GM23248 (cell line): ENCODE measurements at regions of chr3 and their contacts with region 1.

Region 1: DNA sequence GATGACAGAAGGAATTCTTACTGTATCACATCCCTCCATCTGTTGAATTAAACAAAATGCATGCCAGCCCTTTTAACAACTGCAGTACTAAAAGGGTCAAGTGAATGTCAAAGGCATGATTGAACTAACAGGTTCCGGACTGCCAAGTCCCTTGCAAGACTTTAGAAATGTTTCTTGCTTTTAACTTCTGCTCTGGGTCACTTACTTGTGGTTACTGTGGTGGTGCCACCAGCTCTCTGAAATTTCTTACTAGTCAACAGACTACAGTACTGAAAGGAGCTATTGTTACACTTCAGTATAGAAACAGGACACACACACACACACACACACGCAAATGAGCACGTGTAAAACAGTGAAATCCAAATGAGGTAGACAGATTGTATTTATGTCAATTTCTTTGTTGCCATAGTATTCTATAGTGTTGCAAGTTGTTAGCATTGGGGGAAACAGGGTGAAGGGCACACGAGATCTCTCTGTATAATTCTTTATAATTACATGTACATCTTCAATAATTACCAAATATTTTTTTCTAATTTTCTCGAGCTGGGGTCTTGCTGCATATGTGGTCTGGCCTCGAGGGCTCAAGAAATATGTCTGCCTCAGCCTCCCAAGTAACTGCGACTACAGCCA is 79.9 kb upstream of the SLC25A26 start:
- DNase-seq: peak; percentile 6
- H3K4me3 ChIP-seq: no peak overlapping the region
- H3K27ac ChIP-seq: no peak overlapping the region
- H3K4me1 ChIP-seq: peaks cover 8% of the 10 kb centered on the region
- H3K27me3 ChIP-seq: no peaks in the 10 kb centered on the region

Region 2: DNA sequence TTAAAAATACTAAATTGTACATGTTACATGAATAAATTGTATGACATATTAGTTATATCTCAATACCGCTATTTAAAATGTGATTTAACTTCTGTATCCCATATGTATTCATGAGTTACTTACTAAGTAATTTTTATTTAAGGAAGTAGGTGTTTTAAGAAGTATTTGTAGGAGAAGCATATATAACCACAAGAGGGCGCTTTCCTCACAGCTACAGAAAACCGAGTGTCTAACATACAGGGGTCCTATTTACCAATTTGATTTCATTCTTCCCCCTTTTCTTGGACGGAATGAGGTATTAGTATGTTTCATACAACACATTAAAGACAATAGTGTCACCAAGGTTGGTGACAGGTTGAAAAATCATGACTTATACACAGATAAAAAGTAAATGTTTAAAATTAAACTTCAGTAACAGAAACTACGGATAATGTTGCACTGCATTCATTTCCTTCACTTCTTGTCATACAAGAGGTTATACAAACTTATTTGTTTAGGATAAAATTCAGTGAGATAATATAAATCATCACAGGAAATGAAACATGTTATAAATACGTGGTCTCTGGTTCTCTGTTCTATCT is 355.7 kb before region 1 on chr3:
- in situ Hi-C with region 1: loop called (anchors 10 kb)
- DNase-seq: peak; percentile 70
- H3K4me3 ChIP-seq: no peak overlapping the region
- H3K27ac ChIP-seq: no peak overlapping the region
- H3K4me1 ChIP-seq: peaks cover 12% of the 10 kb centered on the region
- H3K27me3 ChIP-seq: no peaks in the 10 kb centered on the region